Mammary epithelial cell (primary cell): ENCODE measurements at regions of chr12 and their contacts with region 1.

Region 1: GRCh38 chr12:6662906-6663742 is at the start of gene ING4:
- DNase-seq: peak; percentile 99
- H3K4me3 ChIP-seq: peak within 1 kb of the TSS; percentile 67 to 71 (median 69)
- H3K27ac ChIP-seq: peak within 1 kb of the TSS; percentile 44
- H3K4me1 ChIP-seq: peaks cover 8% of the 10 kb centered on the region
- H3K27me3 ChIP-seq: no peaks in the 10 kb centered on the region
- CTCF ChIP-seq: no peak
- total RNA-seq, gene ING4: 14.8 to 34.8 TPM

Region 2: DNA sequence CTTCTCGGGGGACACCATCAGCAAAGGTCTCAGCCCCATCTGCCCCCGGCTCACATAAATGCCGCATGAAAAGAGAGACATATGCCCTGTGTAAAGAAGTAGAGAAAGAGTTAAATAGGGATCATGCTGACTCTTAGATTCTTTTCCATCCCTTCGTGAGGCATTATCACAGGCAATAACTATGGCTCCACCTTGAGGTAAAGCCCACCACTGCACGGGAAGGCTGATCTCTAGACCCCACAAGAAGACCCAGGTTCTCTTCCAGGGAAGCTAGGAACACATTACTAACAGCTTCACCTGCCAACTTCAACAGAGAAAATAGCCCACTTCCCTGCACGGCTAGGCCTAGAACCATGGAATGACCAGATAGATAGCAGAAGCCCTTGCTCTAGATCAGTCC is 80.9 kb before region 1 on chr12:
- CTCF ChIA-PET with region 1: no interaction called
- dilution Hi-C with region 1: no loop called
- in situ Hi-C with region 1: no loop called
- intact Hi-C with region 1: no loop called
- DNase-seq: no peak
- H3K4me3 ChIP-seq: no peak overlapping the region
- H3K27ac ChIP-seq: no peak overlapping the region
- H3K4me1 ChIP-seq: no peaks in the 10 kb centered on the region
- H3K27me3 ChIP-seq: no peaks in the 10 kb centered on the region
- CTCF ChIP-seq: peak in 1 of 2 donors; percentile 16

Region 3: DNA sequence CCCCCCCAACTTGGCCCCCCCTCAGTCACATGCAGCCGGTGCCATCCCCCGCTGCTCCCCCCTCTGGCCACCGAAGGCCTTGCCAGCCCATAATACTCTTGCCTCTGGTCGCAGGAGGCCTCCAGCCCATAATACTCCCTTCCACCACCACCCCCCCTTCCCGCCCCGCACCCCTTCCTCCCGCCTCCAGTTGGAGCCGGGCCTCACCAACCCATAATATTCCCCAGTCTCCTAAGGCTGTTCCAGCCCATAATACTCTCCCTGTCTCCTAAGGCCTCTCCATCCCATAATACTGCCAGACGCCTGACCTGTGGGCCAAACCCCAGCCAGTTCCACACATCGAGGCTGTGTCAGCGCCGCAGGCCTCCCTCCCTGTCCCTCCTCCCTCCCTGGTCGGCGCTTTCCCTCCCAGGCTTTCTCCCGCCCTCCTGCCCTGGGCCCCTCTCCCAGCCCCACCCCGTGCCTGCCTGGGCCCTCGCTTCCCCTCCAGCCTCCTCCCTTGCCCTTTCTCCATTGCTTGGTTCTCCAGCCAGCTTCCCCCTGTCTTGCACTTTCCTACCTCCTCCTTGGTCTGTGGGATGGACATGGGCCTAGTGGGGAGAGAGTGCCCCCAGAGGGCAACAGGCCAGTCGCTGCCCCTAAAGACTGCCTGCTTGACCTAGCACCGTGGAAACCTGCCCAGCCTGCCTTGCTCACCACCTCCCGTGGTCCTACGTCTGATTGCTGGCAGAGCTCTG is 49.2 kb before region 1 on chr12:
- CTCF ChIA-PET with region 1: no interaction called
- dilution Hi-C with region 1: no loop called
- in situ Hi-C with region 1: no loop called
- intact Hi-C with region 1: loop called (anchors 2 kb)
- DNase-seq: peak; percentile 65
- H3K4me3 ChIP-seq: no peak overlapping the region
- H3K27ac ChIP-seq: no peak overlapping the region
- H3K4me1 ChIP-seq: peaks cover 17% of the 10 kb centered on the region
- H3K27me3 ChIP-seq: no peaks in the 10 kb centered on the region
- CTCF ChIP-seq: no peak

Region 4: GRCh38 chr12:6708960-6709394 is 45.9 kb after region 1 on chr12:
- CTCF ChIA-PET with region 1: no interaction called
- dilution Hi-C with region 1: loop called (anchors 5 kb)
- in situ Hi-C with region 1: no loop called
- intact Hi-C with region 1: no loop called
- DNase-seq: no peak
- H3K4me3 ChIP-seq: no peak overlapping the region
- H3K27ac ChIP-seq: no peak overlapping the region
- H3K4me1 ChIP-seq: no peaks in the 10 kb centered on the region
- H3K27me3 ChIP-seq: no peaks in the 10 kb centered on the region
- CTCF ChIP-seq: no peak

Region 5: GRCh38 chr12:6723607-6724396 is 60.7 kb after region 1 on chr12 and contains the start of gene COPS7A:
- CTCF ChIA-PET with region 1: no interaction called
- dilution Hi-C with region 1: no loop called
- in situ Hi-C with region 1: no loop called
- intact Hi-C with region 1: loop called (anchors 10 kb)
- DNase-seq: peak; percentile 99
- H3K4me3 ChIP-seq: peak within 1 kb of the TSS; percentile 63 to 79 (median 70)
- H3K27ac ChIP-seq: peak within 1 kb of the TSS; percentile 69
- H3K4me1 ChIP-seq: peaks cover 6% of the 10 kb centered on the region
- H3K27me3 ChIP-seq: no peaks in the 10 kb centered on the region
- CTCF ChIP-seq: no peak
- total RNA-seq, gene COPS7A: 54.2 to 57.2 TPM

Region 6: GRCh38 chr12:6792522-6793201 is 129.5 kb after region 1 on chr12:
- CTCF ChIA-PET with region 1: no interaction called
- dilution Hi-C with region 1: loop called (anchors 5 kb)
- in situ Hi-C with region 1: no loop called
- intact Hi-C with region 1: no loop called
- DNase-seq: no peak
- H3K4me3 ChIP-seq: no peak overlapping the region
- H3K27ac ChIP-seq: no peak overlapping the region
- H3K4me1 ChIP-seq: peaks cover 4% of the 10 kb centered on the region
- H3K27me3 ChIP-seq: no peaks in the 10 kb centered on the region
- CTCF ChIP-seq: no peak